ENCODE measurements at regions of chr9 and their contacts with region 1.

Region 1: GRCh38 chr9:214648-215493 is at the start of gene DOCK8:
- DNase-seq: peak; percentile 93
- H3K4me3 ChIP-seq: peak within 1 kb of the TSS; percentile 73 to 87 (median 78)
- H3K27ac ChIP-seq: peak within 1 kb of the TSS; percentile 89 to 91 (median 90)
- H3K4me1 ChIP-seq: peaks cover 6 to 74% (median 73%) of the 10 kb centered on the region in 4 donors
- H3K27me3 ChIP-seq: peaks cover 0 to 7% (median 0%) of the 10 kb centered on the region in 4 donors
- CTCF ChIP-seq: peak; percentile 51 to 75 (median 56)
- EP300 ChIP-seq: no peak
- POLR2A ChIP-seq: no peak
- total RNA-seq, gene DOCK8: 45.1 to 72.8 (median 48.8) TPM

Region 2: DNA sequence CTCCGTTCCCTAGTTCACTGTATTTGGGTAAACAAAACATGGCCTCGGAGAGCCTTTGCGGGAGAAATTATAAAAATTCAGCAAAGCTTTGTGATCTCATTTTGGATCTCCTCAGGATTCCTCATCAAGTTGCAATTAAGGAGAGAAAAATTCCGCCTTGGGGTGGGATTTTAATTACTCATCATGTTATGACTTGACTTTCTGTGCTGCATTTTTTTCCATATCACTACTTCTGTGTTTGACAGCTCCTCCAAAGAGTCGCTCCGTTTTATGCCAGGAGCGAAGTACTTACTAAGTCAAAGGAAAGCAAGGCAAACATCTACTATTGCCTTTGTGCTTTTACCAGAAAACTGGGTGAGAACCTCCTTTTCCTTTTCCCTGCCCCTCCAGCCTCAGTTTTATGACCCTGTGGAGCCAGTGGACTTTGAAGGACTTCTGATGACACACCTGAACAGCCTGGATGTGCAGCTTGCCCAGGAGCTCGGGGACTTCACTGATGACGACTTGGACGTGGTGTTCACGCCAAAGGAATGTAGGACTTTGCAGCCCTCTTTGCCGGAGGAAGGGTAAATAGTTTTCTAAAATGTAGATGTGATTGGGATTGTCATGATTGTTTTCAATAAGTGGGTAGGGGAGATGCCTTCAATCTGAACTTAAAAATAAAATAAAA is 71.3 kb after region 1 on chr9:
- intact Hi-C with region 1: loop called (anchors 5 kb)
- DNase-seq: no peak
- H3K4me3 ChIP-seq: peak overlapping the region; percentile 21 to 37 (median 28)
- H3K27ac ChIP-seq: peak overlapping the region; percentile 61 to 78 (median 73)
- H3K4me1 ChIP-seq: peaks cover 0 to 67% (median 49%) of the 10 kb centered on the region in 4 donors
- H3K27me3 ChIP-seq: no peaks in the 10 kb centered on the region
- CTCF ChIP-seq: no peak
- EP300 ChIP-seq: no peak
- POLR2A ChIP-seq: no peak

Region 3: GRCh38 chr9:304519-305190 is 89.8 kb after region 1 on chr9:
- intact Hi-C with region 1: loop called (anchors 5 kb)
- DNase-seq: no peak
- H3K4me3 ChIP-seq: peak overlapping the region; percentile 2 to 37 (median 22)
- H3K27ac ChIP-seq: peak overlapping the region; percentile 73 to 76 (median 74)
- H3K4me1 ChIP-seq: peaks cover 0 to 14% (median 11%) of the 10 kb centered on the region in 4 donors
- H3K27me3 ChIP-seq: no peaks in the 10 kb centered on the region
- CTCF ChIP-seq: no peak
- EP300 ChIP-seq: no peak
- POLR2A ChIP-seq: no peak

Region 4: GRCh38 chr9:561430-561829 is 346.6 kb after region 1 on chr9:
- intact Hi-C with region 1: no loop called
- DNase-seq: no peak
- H3K4me3 ChIP-seq: no peak overlapping the region
- H3K27ac ChIP-seq: no peak overlapping the region
- H3K4me1 ChIP-seq: peaks cover 0 to 21% (median 0%) of the 10 kb centered on the region in 4 donors
- H3K27me3 ChIP-seq: no peaks in the 10 kb centered on the region
- CTCF ChIP-seq: no peak
- EP300 ChIP-seq: no peak
- POLR2A ChIP-seq: no peak